Activated CD4-positive, alpha-beta memory T cell treated with anti-CD3 and anti-CD28 coated beads for 36 hours (primary cell): ENCODE measurements at regions of chr9 and their contacts with region 1.

Region 1: DNA sequence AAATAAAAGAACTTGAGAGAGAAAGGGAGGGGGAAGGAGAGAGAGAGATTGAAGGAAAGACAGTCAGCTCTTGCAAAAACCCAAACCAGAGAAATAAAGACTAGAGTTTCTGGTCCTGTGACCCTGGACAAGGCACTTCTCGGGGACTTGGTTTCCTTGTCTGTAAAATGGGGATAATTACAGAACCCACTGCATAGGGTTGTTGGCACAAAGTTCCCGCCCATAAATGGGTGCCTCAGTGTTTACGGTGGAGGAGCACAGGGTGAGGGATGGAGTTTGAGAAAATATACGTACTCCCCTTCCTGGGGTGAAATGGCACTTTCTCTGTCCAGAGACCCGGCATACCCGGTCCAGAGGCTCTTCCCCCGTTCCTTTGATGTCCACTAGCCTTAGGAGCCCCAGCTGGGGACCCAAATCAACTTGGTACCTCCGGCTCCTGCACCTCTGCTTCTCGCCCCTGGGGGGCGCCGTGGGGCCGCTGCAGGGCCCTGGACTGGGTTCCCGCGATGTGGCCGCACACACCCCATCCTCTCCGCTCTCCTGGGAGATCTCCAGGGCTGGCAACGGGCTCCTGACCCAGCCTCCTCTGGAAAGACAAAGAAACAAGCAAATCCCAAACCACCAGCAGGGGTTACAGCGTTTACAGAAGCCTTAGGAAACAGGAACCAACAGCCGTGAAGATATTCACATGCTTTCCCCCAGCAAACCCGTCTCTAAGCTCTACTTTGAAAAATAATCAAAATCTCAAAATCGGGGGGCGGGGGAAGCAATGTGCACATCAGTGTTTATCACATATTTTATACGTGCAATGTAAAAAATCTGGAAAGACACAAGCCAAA is 26.3 kb downstream of the PTGES start:
- DNase-seq: peak; percentile 75
- H3K4me3 Mint-ChIP-seq: no peak overlapping the region
- H3K27ac Mint-ChIP-seq: no peak overlapping the region
- H3K4me1 Mint-ChIP-seq: peaks cover 2% of the 10 kb centered on the region
- H3K27me3 Mint-ChIP-seq: peaks cover 9% of the 10 kb centered on the region

Region 2: GRCh38 chr9:129712634-129713401 is 13.7 kb before region 1 on chr9:
- CTCF ChIA-PET with region 1: interaction called, 14 read pairs
- POLR2A ChIA-PET with region 1: no interaction called
- intact Hi-C with region 1: no loop called
- DNase-seq: no peak
- H3K4me3 Mint-ChIP-seq: no peak overlapping the region
- H3K27ac Mint-ChIP-seq: no peak overlapping the region
- H3K4me1 Mint-ChIP-seq: peaks cover 8% of the 10 kb centered on the region
- H3K27me3 Mint-ChIP-seq: no peaks in the 10 kb centered on the region

Region 3: GRCh38 chr9:129776938-129777768 is 50.6 kb after region 1 on chr9:
- CTCF ChIA-PET with region 1: interaction called, 85 read pairs
- POLR2A ChIA-PET with region 1: no interaction called
- intact Hi-C with region 1: no loop called
- DNase-seq: peak; percentile 82
- H3K4me3 Mint-ChIP-seq: no peak overlapping the region
- H3K27ac Mint-ChIP-seq: no peak overlapping the region
- H3K4me1 Mint-ChIP-seq: peaks cover 15% of the 10 kb centered on the region
- H3K27me3 Mint-ChIP-seq: peaks cover 7% of the 10 kb centered on the region

Region 4: GRCh38 chr9:129783516-129784361 is 57.2 kb after region 1 on chr9:
- CTCF ChIA-PET with region 1: interaction called, 85 read pairs
- POLR2A ChIA-PET with region 1: no interaction called
- intact Hi-C with region 1: loop called (anchors 1 kb)
- DNase-seq: peak; percentile 80
- H3K4me3 Mint-ChIP-seq: no peak overlapping the region
- H3K27ac Mint-ChIP-seq: no peak overlapping the region
- H3K4me1 Mint-ChIP-seq: no peaks in the 10 kb centered on the region
- H3K27me3 Mint-ChIP-seq: no peaks in the 10 kb centered on the region

Region 5: GRCh38 chr9:129796029-129796910 is 69.7 kb after region 1 on chr9:
- CTCF ChIA-PET with region 1: interaction called, 33 read pairs
- POLR2A ChIA-PET with region 1: no interaction called
- intact Hi-C with region 1: no loop called
- DNase-seq: no peak
- H3K4me3 Mint-ChIP-seq: no peak overlapping the region
- H3K27ac Mint-ChIP-seq: no peak overlapping the region
- H3K4me1 Mint-ChIP-seq: no peaks in the 10 kb centered on the region
- H3K27me3 Mint-ChIP-seq: no peaks in the 10 kb centered on the region

Region 6: DNA sequence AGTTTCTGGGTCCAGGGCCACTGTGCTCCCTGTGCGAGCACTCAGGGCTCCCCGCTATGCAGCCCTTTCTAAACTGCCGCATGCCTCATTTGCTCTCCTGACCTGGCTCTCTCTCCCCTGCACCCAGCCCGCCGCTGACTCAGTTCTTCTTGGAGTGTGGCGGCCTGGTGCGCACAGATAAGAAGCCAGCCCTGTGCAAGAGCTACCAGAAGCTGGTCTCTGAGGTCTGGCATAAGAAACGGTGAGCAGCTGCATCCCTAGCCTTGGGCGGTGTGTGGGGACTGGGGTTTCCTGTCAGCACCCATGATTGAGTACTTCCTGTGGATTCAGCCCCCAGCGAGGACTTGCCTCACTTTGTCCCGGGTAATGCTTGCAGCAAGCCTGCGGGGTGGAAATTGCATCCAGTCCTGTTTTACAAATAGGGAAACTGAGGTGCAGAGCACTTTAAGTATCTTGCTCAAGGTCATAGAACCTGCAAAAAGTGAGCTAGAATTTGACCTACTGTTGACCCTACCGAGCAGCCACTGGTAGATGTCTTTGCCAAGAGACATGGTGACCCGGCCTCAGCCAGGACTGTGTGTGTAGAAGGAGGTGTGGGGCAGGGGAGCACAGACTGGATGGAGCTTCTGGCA is 136.6 kb after region 1 on chr9:
- CTCF ChIA-PET with region 1: no interaction called
- POLR2A ChIA-PET with region 1: no interaction called
- intact Hi-C with region 1: no loop called
- DNase-seq: peak; percentile 89
- H3K4me3 Mint-ChIP-seq: peak overlapping the region; percentile 52
- H3K27ac Mint-ChIP-seq: peak overlapping the region; percentile 84
- H3K4me1 Mint-ChIP-seq: peaks cover 70% of the 10 kb centered on the region
- H3K27me3 Mint-ChIP-seq: no peaks in the 10 kb centered on the region